Mammary epithelial cell (primary cell): ENCODE measurements at regions of chr11 and their contacts with region 1.

Region 1: DNA sequence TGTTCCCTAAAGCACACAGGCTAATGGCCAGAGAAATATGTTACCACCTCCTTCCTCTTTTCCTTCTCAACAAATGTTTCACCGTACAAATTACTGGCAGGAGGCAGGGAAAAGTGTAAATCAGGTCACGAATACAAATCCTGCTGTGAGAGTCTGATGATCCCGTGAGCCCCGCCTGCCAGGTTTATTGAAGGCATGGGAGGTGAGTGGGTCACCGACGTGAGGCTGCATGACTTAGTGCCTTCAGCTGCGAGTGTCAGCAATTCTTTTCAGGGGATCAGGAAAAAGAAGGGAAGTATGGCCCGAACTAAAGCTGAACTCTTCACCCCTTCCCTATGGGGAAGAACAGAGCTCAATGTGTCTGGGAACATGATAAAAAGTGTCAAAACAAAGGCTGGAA is 166.2 kb downstream of the OPCML start:
- DNase-seq: no peak
- H3K4me3 ChIP-seq: no peak overlapping the region
- H3K27ac ChIP-seq: no peak overlapping the region
- H3K4me1 ChIP-seq: no peaks in the 10 kb centered on the region
- H3K27me3 ChIP-seq: no peaks in the 10 kb centered on the region
- CTCF ChIP-seq: no peak

Region 2: DNA sequence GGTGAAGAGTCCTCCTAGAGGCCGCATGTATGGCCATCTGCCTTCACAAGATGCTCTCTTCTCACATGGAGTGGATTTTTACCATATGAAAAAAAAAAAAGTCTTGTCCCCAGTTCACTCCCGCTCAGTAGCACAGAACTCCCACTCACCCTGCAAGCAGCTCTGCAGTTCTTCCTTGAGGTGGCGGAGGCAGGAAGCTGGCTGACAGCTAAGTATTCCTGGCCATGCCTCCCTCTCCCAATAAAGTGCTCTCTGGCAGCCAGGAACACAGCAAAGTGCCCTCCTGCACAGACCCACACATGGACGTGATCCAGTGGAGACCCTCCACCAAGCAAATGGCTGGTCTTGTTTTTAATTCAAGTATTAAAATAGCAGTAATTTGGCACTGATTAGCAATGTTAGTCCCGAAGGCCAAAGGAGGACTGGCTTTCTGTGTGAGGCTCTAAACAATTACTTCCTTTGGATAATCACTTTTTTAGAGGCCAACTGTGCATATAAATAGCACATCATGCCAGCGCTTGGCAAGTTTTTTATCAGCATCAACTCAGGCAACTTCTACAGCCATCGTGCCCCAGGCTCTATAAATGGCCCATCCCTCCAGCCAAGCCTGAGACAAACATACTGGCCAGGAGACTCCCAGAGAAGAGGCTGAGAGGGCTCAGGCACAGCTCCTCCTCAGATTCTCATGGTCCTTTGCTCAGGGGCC is 247.4 kb before region 1 on chr11:
- CTCF ChIA-PET with region 1: no interaction called
- dilution Hi-C with region 1: no loop called
- in situ Hi-C with region 1: no loop called
- intact Hi-C with region 1: no loop called
- DNase-seq: no peak
- H3K4me3 ChIP-seq: no peak overlapping the region
- H3K27ac ChIP-seq: no peak overlapping the region
- H3K4me1 ChIP-seq: no peaks in the 10 kb centered on the region
- H3K27me3 ChIP-seq: peaks cover 4% of the 10 kb centered on the region
- CTCF ChIP-seq: no peak

Region 3: GRCh38 chr11:133266986-133267385 is 99.1 kb before region 1 on chr11:
- CTCF ChIA-PET with region 1: no interaction called
- dilution Hi-C with region 1: no loop called
- in situ Hi-C with region 1: no loop called
- intact Hi-C with region 1: no loop called
- DNase-seq: no peak
- H3K4me3 ChIP-seq: no peak overlapping the region
- H3K27ac ChIP-seq: no peak overlapping the region
- H3K4me1 ChIP-seq: no peaks in the 10 kb centered on the region
- H3K27me3 ChIP-seq: peaks cover 2% of the 10 kb centered on the region
- CTCF ChIP-seq: no peak

Region 4: DNA sequence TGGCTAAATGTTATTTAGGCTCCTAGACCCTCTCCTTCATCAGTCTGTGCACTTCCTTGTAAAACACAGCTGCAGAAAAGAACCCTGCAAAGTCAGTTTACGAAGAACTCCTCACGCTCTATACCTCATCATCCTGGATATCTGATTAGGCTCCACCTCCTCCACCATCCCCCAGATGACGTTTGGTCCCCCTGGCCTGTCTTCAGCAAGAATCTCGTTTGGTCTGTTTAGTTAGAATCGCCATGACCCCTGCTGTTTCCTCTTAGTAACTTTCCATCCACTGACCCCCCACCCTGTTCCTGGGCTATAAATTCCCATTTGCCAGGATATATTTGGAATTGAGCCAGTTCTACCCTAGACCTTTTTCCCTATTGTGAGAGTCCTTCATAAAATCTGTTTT is 47.9 kb before region 1 on chr11:
- CTCF ChIA-PET with region 1: no interaction called
- dilution Hi-C with region 1: loop called (anchors 5 kb)
- in situ Hi-C with region 1: no loop called
- intact Hi-C with region 1: no loop called
- DNase-seq: no peak
- H3K4me3 ChIP-seq: no peak overlapping the region
- H3K27ac ChIP-seq: no peak overlapping the region
- H3K4me1 ChIP-seq: no peaks in the 10 kb centered on the region
- H3K27me3 ChIP-seq: no peaks in the 10 kb centered on the region
- CTCF ChIP-seq: no peak

Region 5: GRCh38 chr11:133403900-133404299 is 37.8 kb after region 1 on chr11:
- CTCF ChIA-PET with region 1: no interaction called
- dilution Hi-C with region 1: no loop called
- in situ Hi-C with region 1: no loop called
- intact Hi-C with region 1: no loop called
- DNase-seq: no peak
- H3K4me3 ChIP-seq: no peak overlapping the region
- H3K27ac ChIP-seq: no peak overlapping the region
- H3K4me1 ChIP-seq: peaks cover 2% of the 10 kb centered on the region
- H3K27me3 ChIP-seq: no peaks in the 10 kb centered on the region
- CTCF ChIP-seq: peak; percentile 29 to 55

Region 6: GRCh38 chr11:133443206-133443747 is 77.2 kb after region 1 on chr11:
- CTCF ChIA-PET with region 1: no interaction called
- dilution Hi-C with region 1: loop called (anchors 5 kb)
- in situ Hi-C with region 1: no loop called
- intact Hi-C with region 1: no loop called
- DNase-seq: peak; percentile 47
- H3K4me3 ChIP-seq: no peak overlapping the region
- H3K27ac ChIP-seq: peak overlapping the region; percentile 11
- H3K4me1 ChIP-seq: peaks cover 13% of the 10 kb centered on the region
- H3K27me3 ChIP-seq: no peaks in the 10 kb centered on the region
- CTCF ChIP-seq: no peak